Activated CD8-positive, alpha-beta T cell treated with anti-CD3 and anti-CD28 coated beads for 36 hours (primary cell): ENCODE measurements at regions of chr4 and their contacts with region 1.

Region 1: DNA sequence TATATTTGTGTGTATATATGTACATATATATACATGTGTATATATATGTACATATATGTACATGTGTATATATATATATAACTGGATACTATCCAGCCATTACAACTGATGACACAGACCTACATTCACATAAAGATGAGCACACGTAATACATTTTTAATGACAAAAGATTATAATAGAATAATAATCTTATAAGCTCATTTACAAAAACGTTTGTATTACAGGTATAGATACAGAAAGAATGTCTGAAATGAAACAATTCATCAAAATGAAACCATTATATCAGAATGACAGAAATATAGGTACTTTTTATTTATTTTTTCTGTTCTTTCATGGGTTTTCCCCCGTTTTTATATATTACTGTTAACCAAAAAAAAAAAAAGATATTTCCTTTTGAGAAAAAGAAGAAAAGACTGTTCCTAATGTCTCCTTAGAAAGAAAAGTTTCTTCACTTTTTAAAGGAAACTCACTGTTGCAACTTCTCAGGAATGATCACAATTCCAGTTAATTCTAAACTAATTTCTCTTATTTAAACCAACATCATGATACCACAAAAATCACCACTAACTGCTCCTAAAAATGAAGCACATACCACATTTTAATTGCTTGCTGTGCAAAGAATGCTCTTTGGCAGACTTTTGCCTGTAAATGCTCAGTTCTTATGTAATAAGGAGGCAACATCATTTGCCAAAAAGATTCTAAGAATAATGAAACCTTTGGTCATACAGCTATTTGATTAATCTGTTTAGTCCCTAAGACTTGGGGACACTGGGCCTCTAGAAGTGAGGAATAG is 18.9 kb downstream of the LEF1 start:
- DNase-seq: no peak
- ATAC-seq: no peak
- H3K4me3 Mint-ChIP-seq: peak overlapping the region; percentile 34
- H3K27ac Mint-ChIP-seq: peak overlapping the region; percentile 90
- H3K4me1 Mint-ChIP-seq: peaks cover 75% of the 10 kb centered on the region
- H3K27me3 Mint-ChIP-seq: no peaks in the 10 kb centered on the region
- CTCF ChIP-seq: no peak

Region 2: GRCh38 chr4:108166441-108167315 is 16.9 kb after region 1 on chr4:
- CTCF ChIA-PET with region 1: interaction called, 7 read pairs
- POLR2A ChIA-PET with region 1: interaction called, 13 read pairs
- intact Hi-C with region 1: no loop called
- DNase-seq: peak; percentile 83
- ATAC-seq: peak; percentile 34
- H3K4me3 Mint-ChIP-seq: peak overlapping the region; percentile 87
- H3K27ac Mint-ChIP-seq: peak overlapping the region; percentile 98
- H3K4me1 Mint-ChIP-seq: peaks cover 31% of the 10 kb centered on the region
- H3K27me3 Mint-ChIP-seq: peaks cover 9% of the 10 kb centered on the region
- CTCF ChIP-seq: no peak

Region 3: GRCh38 chr4:108204518-108204917 is 54.7 kb after region 1 on chr4:
- CTCF ChIA-PET with region 1: no interaction called
- POLR2A ChIA-PET with region 1: no interaction called
- intact Hi-C with region 1: no loop called
- DNase-seq: no peak
- ATAC-seq: peak; percentile 78
- H3K4me3 Mint-ChIP-seq: no peak overlapping the region
- H3K27ac Mint-ChIP-seq: peak overlapping the region; percentile 60
- H3K4me1 Mint-ChIP-seq: peaks cover 30% of the 10 kb centered on the region
- H3K27me3 Mint-ChIP-seq: no peaks in the 10 kb centered on the region
- CTCF ChIP-seq: no peak

Region 4: DNA sequence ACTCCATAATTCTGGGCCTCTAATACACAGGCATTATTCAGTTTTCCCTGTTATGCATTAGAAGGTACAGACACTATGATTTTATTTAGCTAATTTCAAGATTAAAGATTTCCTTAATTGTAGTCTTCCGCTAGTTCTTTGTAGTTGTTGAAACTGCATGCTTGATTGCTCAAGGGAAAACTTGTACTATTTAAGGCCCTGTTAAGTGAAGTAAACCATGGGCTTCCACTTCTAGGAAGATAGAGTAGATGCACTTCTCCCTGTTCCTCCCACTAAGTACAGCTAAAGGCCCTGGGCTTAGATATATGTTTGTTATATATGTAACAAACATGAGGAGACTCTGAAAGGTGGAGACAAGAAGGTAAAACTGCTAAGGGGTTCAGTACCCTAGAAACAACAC is 234.8 kb after region 1 on chr4:
- CTCF ChIA-PET with region 1: no interaction called
- POLR2A ChIA-PET with region 1: no interaction called
- intact Hi-C with region 1: no loop called
- DNase-seq: no peak
- ATAC-seq: no peak
- H3K4me3 Mint-ChIP-seq: no peak overlapping the region
- H3K27ac Mint-ChIP-seq: no peak overlapping the region
- H3K4me1 Mint-ChIP-seq: no peaks in the 10 kb centered on the region
- H3K27me3 Mint-ChIP-seq: no peaks in the 10 kb centered on the region
- CTCF ChIP-seq: no peak